AG04449 (cell line): ENCODE measurements at regions of chr2 and their contacts with region 1.

Region 1: DNA sequence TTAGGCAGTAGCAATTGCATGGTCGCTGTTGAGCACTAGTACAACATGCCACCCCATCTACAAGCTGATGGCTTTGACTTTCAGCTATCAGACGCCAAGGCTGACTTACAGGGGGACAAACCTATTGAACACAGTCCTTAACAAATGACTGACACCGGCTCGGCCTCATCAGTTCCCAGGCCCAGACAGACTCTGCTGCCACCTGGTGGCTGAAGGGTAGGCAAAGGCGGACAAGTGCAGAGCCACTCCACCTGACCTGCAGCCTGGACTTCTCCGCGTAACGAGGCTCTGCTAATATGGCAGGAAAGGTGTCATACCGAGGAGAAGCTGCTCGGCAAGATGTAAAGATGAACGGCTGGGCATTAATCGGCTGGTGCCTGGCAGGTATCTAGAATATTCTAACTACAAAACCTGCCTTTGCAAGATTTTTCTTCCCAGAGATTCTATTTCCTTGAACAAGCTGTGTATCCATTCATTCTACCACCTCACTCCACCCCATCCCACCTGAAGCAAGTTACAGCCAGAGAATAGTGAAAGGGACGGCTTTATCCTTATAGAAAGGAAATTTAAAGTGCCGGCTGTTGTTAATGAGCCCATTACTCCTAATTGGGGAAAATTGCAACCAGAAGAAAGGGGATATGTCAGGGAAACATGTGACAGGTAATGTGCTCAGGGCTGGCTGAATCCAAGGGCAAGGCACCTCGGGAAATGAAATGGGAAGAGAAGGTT is 67.4 kb downstream of the STEAP3 start:
- DNase-seq: peak; percentile 4
- H3K4me3 ChIP-seq: no peak overlapping the region
- CTCF ChIP-seq: peak; percentile 88

Region 2: GRCh38 chr2:119011162-119011909 is 279.7 kb before region 1 on chr2:
- CTCF ChIA-PET with region 1: interaction called, 53 read pairs
- POLR2A ChIA-PET with region 1: no interaction called
- DNase-seq: no peak
- H3K4me3 ChIP-seq: no peak overlapping the region; the same call in 1 of the 2 replicates
- CTCF ChIP-seq: peak; percentile 67

Region 3: DNA sequence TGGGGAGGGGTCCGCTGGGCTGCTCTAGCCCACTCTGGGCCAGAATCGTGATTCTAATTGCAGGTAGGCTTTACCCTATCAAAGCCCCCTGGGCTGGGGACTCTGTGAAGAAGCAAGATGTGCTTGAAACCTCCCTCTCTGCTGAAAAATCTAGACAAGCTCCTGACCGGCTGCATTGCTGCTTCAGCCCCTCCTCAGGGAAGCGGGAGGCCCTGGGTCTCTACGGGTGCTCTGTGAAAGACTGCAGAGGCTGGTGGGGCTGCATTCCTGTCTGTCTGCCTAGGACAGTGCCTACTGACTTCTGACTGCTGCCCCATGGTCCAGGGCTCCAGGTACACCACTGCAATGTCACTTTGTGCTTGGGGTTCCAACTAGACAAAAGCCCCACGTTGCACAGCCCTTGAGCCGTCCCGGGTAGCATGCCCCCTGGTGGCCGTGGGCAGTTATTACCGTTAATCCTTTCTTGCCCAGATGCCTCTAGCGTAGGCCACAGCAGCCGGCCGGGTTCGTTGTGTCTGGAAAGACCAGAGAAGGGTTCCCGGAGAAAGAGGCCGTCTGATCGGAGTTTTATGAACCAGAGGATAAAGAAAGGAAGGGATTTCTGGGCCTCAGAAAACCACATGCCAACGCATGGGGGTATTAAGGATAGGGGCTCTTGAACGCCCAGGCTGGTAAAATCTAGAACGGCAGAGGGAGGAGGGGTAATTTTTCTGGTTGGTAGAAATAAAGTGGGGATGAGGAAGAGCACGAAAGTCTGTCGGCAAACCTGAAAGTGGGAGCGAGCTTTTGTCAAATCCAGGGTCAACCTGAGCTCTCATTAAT is 116.6 kb before region 1 on chr2:
- CTCF ChIA-PET with region 1: interaction called, 13 read pairs
- POLR2A ChIA-PET with region 1: no interaction called
- DNase-seq: no peak
- H3K4me3 ChIP-seq: no peak overlapping the region
- CTCF ChIP-seq: peak; percentile 80

Region 4: DNA sequence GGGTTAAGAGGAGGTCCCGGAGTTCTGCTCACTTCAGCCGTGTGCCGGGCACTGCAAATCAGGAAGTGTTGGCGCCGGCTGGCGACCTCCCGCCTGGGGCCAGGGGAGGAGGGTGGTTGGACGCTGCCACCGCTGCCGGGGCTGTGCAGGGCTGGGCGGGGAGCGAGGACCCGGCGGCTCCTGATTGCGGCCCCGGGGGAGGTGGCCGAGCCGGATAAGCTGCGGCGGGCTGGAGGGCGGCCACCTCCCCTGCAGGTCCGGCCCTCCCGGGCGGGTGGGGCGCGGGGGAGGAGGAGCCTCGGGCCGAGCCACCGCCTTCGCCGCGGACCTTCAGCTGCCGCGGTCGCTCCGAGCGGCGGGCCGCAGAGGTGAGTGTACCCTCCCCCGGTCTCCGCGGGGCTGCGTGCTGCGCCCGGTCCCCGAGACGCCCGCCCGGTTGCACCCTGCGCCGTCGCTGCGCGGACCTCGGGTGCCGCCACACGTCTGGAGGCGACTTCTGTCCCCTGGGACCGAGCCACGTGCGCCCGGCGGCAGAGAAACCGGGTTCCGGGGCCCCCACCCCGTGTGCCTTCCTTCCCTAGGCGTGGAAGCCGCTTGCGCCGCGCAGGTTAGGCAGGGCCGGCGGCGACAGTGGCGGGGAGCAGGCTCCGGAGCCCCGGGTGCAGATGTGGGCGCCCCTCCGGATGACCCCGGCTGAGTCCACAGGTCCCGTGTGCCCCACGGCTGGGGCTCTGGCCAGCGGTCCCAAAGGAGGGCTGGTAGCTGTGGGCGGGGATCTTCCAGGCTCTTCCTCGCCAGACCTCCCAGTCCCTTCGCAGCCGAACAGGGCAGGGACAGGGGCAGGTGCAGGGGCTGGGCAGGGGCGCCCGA is 67.3 kb before region 1 on chr2 and contains the start of gene STEAP3:
- CTCF ChIA-PET with region 1: interaction called, 122 read pairs
- POLR2A ChIA-PET with region 1: no interaction called
- DNase-seq: no peak
- H3K4me3 ChIP-seq: peak within 1 kb of the TSS; percentile 73
- CTCF ChIP-seq: no peak

Region 5: GRCh38 chr2:119264781-119265692 is 26.0 kb before region 1 on chr2:
- CTCF ChIA-PET with region 1: interaction called, 15 read pairs
- POLR2A ChIA-PET with region 1: no interaction called
- DNase-seq: no peak
- H3K4me3 ChIP-seq: no peak overlapping the region
- CTCF ChIP-seq: peak; percentile 90